ENCODE measurements at regions of chr15 and their contacts with region 1.

Region 1: DNA sequence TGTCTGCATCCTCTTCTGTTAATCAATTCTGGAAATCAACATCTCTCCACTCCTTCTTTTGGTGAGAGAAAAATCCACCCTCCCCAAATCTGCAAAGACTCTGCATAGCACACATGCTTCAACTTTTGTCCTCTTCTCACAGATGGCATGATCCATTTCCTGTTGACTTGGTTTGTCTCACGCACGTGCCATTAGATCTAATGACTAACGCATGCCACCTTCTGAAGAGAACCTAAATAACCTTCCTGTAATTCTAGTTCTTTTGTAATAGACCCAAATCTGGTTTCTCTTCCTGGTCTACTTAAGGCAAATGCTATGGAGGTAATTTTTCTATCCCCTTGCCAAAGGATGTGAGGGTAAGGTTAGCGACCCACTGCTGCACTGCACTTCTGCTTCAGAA is 51.0 kb upstream of the ATOSA start:
- DNase-seq: peak; percentile 95
- H3K4me3 ChIP-seq: no peak overlapping the region
- H3K27ac ChIP-seq: peak overlapping the region; percentile 65
- H3K4me1 ChIP-seq: peaks cover 65% of the 10 kb centered on the region
- CTCF ChIP-seq: peak; percentile 76

Region 2: DNA sequence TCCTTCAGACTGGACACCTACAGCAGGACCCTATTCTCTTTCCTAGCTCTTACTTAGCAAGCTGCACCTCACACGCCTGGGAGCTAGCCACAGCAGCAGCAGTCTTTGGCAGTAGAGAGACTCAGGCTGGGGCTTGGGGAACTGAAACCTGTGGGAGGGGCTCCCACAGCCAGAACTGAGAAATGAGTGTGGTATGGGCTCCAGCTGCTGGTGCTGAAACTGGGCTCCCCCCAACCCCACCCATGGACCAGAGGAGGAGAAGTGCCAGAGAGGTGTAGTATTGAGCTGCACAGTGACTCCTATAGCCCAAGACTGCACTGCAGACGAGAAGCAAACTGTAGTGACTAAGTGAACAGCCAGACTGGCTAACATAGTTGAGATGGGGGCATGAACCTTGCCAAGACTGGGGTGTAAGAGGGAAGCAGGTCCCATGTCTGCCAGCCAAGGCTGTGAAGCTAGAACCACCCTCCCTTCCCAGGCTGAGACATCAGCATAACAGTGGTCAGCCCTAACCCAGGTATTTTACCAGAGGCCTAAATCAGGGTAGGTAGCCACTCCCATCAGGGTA is 264.0 kb before region 1 on chr15:
- CTCF ChIA-PET with region 1: no interaction called
- POLR2A ChIA-PET with region 1: interaction called, 5 read pairs
- intact Hi-C with region 1: loop called (anchors 5 kb)
- DNase-seq: peak; percentile 97
- H3K4me3 ChIP-seq: peak overlapping the region; percentile 51
- H3K27ac ChIP-seq: peak overlapping the region; percentile 81
- H3K4me1 ChIP-seq: peaks cover 53% of the 10 kb centered on the region
- CTCF ChIP-seq: peak; percentile 78

Region 3: DNA sequence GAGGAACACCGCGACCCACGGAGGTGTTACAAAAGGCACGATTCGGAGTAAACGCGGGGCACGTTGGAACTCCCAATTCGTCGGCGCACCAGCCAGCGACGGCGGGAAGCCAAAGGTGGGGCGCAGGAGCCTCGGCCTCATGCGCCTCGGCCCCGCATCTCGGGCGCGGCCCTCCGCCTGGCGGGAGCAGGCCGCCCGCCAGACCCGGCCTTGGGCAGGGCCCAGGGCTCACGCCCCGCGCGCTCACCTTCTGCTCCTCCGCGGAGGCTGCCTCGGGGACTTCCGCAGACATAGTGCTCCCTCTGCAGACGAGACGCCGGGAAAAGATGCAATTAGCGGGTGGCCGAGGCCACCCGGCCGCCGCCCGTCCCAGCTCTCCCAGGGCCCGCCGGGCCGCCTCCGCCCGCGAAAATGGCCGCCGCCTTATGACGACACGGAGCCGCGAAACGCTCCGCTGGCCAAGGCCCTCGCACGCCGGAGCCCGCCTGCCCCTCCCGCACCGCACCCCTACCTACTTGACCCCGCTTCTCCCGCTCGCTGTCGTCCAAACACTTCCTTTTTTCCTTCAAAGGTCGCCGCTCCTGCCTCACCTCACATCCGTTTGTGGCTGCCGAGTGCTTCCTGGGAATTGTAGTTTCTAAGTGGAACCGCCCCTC is 161.4 kb before region 1 on chr15 and contains the start of gene ARPP19:
- CTCF ChIA-PET with region 1: no interaction called
- POLR2A ChIA-PET with region 1: interaction called, 4 read pairs
- intact Hi-C with region 1: loop called (anchors 1 kb)
- DNase-seq: peak; percentile 90
- H3K4me3 ChIP-seq: peak within 1 kb of the TSS; percentile 85
- H3K27ac ChIP-seq: peak within 1 kb of the TSS; percentile 75
- H3K4me1 ChIP-seq: peaks cover 30% of the 10 kb centered on the region
- CTCF ChIP-seq: peak; percentile 58
- total RNA-seq, gene ARPP19: 48.0 and 68.3 TPM in 2 replicates

Region 4: GRCh38 chr15:52584414-52584813 is 145.8 kb before region 1 on chr15:
- CTCF ChIA-PET with region 1: no interaction called
- POLR2A ChIA-PET with region 1: interaction called, 3 read pairs
- intact Hi-C with region 1: loop called (anchors 5 kb)
- DNase-seq: no peak
- H3K4me3 ChIP-seq: no peak overlapping the region
- H3K27ac ChIP-seq: no peak overlapping the region
- H3K4me1 ChIP-seq: no peaks in the 10 kb centered on the region
- CTCF ChIP-seq: no peak

Region 5: GRCh38 chr15:52709190-52709981 is 20.8 kb before region 1 on chr15:
- CTCF ChIA-PET with region 1: no interaction called
- POLR2A ChIA-PET with region 1: interaction called, 10 read pairs
- intact Hi-C with region 1: no loop called
- DNase-seq: peak; percentile 91
- H3K4me3 ChIP-seq: peak overlapping the region; percentile 73
- H3K27ac ChIP-seq: peak overlapping the region; percentile 90
- H3K4me1 ChIP-seq: peaks cover 47% of the 10 kb centered on the region
- CTCF ChIP-seq: no peak